Calu3 (cell line): ENCODE measurements at regions of chr20 and their contacts with region 1.

Region 1: GRCh38 chr20:60795651-60796050 is 456.4 kb upstream of the CDH4 start:
- DNase-seq: no peak
- H3K4me3 Mint-ChIP-seq: no peak overlapping the region
- H3K27ac Mint-ChIP-seq: no peak overlapping the region
- H3K4me1 Mint-ChIP-seq: no peaks in the 10 kb centered on the region
- H3K27me3 Mint-ChIP-seq: no peaks in the 10 kb centered on the region
- CTCF ChIP-seq: no peak

Region 2: GRCh38 chr20:60395991-60396390 is 399.7 kb before region 1 on chr20:
- CTCF ChIA-PET with region 1: no interaction called
- intact Hi-C with region 1: no loop called
- DNase-seq: no peak
- H3K4me3 Mint-ChIP-seq: no peak overlapping the region
- H3K27ac Mint-ChIP-seq: no peak overlapping the region
- H3K4me1 Mint-ChIP-seq: no peaks in the 10 kb centered on the region
- H3K27me3 Mint-ChIP-seq: no peaks in the 10 kb centered on the region
- CTCF ChIP-seq: no peak

Region 3: GRCh38 chr20:60695226-60696000 is 100.2 kb before region 1 on chr20:
- CTCF ChIA-PET with region 1: no interaction called
- intact Hi-C with region 1: no loop called
- DNase-seq: no peak
- H3K4me3 Mint-ChIP-seq: no peak overlapping the region
- H3K27ac Mint-ChIP-seq: no peak overlapping the region
- H3K4me1 Mint-ChIP-seq: no peaks in the 10 kb centered on the region
- H3K27me3 Mint-ChIP-seq: no peaks in the 10 kb centered on the region
- CTCF ChIP-seq: no peak

Region 4: GRCh38 chr20:60718743-60719322 is 76.8 kb before region 1 on chr20:
- CTCF ChIA-PET with region 1: interaction called, 11 read pairs
- intact Hi-C with region 1: no loop called
- DNase-seq: no peak
- H3K4me3 Mint-ChIP-seq: no peak overlapping the region
- H3K27ac Mint-ChIP-seq: no peak overlapping the region
- H3K4me1 Mint-ChIP-seq: no peaks in the 10 kb centered on the region
- H3K27me3 Mint-ChIP-seq: no peaks in the 10 kb centered on the region
- CTCF ChIP-seq: no peak